AG04450 (cell line): ENCODE measurements at regions of chr13 and their contacts with region 1.

Region 1: DNA sequence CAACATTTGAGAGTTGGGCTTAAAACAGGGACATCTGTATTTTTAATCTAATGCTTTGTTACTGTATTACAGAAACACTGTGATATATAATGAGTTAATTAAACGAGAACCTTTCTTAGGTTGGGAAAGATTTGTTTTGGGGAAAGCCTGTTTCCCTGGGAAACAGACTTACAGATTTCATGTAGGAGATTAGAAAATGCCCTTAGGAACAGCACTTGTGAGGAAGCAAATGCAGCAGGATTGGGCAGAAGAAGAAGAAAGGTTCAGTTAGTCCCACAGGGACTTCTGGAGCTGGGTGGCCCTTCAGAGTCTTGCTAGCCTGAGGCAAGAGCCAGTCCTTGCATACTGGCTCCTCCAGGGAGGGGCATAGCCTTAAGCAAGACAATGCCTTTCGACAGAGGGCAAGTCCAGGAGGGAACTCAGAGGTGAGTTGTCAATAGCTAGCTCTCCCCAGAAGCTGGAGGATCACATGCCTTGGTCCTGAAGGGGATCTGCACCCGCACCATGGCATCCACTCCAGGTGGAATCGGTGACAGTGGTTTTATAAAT is 36.8 kb downstream of the N4BP2L1 start:
- DNase-seq: no peak
- H3K4me3 ChIP-seq: no peak overlapping the region
- H3K27ac ChIP-seq: no peak overlapping the region
- H3K27me3 ChIP-seq: no peaks in the 10 kb centered on the region
- CTCF ChIP-seq: no peak

Region 2: GRCh38 chr13:31767171-31767900 is 623.8 kb before region 1 on chr13:
- CTCF ChIA-PET with region 1: no interaction called
- POLR2A ChIA-PET with region 1: no interaction called
- DNase-seq: peak; percentile 48
- H3K4me3 ChIP-seq: no peak overlapping the region
- H3K27ac ChIP-seq: peak overlapping the region; percentile 31
- H3K27me3 ChIP-seq: no peaks in the 10 kb centered on the region
- CTCF ChIP-seq: no peak

Region 3: DNA sequence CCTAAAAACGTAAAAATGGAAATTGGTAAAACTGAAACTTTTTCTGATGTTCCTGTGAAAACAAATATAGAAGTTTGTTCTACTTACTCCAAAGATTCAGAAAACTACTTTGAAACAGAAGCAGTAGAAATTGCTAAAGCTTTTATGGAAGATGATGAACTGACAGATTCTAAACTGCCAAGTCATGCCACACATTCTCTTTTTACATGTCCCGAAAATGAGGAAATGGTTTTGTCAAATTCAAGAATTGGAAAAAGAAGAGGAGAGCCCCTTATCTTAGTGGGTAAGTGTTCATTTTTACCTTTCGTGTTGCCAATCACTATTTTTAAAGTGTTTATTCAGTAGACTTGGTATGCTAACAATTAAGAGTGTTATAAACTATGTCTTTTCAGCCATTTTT is 50.2 kb before region 1 on chr13:
- CTCF ChIA-PET with region 1: no interaction called
- POLR2A ChIA-PET with region 1: interaction called, 14 read pairs
- DNase-seq: no peak
- H3K4me3 ChIP-seq: no peak overlapping the region
- H3K27ac ChIP-seq: no peak overlapping the region
- H3K27me3 ChIP-seq: no peaks in the 10 kb centered on the region
- CTCF ChIP-seq: no peak